ENCODE measurements at regions of chr1 and their contacts with region 1.

Region 1: GRCh38 chr1:175373786-175374623 is 181.4 kb upstream of the KIAA0040 start:
- DNase-seq: peak; percentile 77
- H3K4me3 ChIP-seq: peak overlapping the region in 1 of 2 experiments; percentile 29; a peak in 1 of 4 replicates
- H3K27ac ChIP-seq: no peak overlapping the region; a peak in 1 of 4 replicates
- H3K4me1 ChIP-seq: peaks cover 0 to 30% of the 10 kb centered on the region in 2 experiments; a peak in 2 of 4 replicates
- H3K27me3 ChIP-seq: no peaks in the 10 kb centered on the region
- CTCF ChIP-seq: peak; percentile 42
- EP300 ChIP-seq: no peak
- RAD21 ChIP-seq: peak; percentile 90

Region 2: DNA sequence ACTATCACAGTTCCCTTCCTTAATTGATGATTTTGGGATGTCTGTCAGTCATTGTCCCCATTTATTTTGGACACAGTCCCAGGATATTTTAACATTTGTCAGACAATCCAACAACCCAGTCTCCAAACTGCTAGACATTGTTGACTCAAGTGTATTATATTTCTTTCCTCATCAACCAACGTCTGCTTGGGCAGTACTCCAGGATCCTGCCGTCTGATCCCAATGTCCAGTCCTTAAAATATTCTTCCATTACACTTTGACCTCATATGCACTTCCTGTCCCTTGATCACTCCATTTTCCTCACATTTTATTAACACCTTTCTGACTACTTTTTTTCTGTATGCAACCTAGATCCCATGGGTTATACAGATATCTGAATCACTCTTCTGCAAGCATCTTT is 141.7 kb before region 1 on chr1:
- CTCF ChIA-PET with region 1: no interaction called
- POLR2A ChIA-PET with region 1: no interaction called
- DNase-seq: no peak
- H3K4me3 ChIP-seq: no peak overlapping the region
- H3K27ac ChIP-seq: no peak overlapping the region
- H3K4me1 ChIP-seq: no peaks in the 10 kb centered on the region
- H3K27me3 ChIP-seq: no peaks in the 10 kb centered on the region
- CTCF ChIP-seq: no peak
- EP300 ChIP-seq: no peak
- RAD21 ChIP-seq: no peak

Region 3: DNA sequence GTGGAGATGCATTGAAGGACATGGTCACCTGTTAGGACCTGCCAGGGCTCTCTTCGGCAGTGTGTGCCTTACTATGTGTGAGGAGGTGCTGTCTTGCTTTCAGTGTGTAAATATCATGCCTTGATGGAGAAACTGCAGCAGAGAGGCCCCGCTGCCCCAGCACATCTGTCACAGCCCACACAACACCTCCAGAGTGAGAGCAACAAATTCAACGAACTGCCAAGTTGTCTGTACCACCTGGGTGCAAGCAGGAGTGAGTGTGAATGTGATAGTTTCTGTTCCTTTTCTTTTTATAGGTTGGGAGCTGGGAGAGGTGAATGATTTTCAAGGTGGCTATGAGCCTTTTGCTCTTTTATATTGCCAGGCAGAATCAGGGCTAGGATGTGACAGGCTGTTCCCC is 66.8 kb before region 1 on chr1:
- CTCF ChIA-PET with region 1: no interaction called
- POLR2A ChIA-PET with region 1: no interaction called
- DNase-seq: no peak
- H3K4me3 ChIP-seq: no peak overlapping the region
- H3K27ac ChIP-seq: no peak overlapping the region
- H3K4me1 ChIP-seq: no peaks in the 10 kb centered on the region
- H3K27me3 ChIP-seq: no peaks in the 10 kb centered on the region
- CTCF ChIP-seq: no peak
- EP300 ChIP-seq: no peak
- RAD21 ChIP-seq: no peak

Region 4: DNA sequence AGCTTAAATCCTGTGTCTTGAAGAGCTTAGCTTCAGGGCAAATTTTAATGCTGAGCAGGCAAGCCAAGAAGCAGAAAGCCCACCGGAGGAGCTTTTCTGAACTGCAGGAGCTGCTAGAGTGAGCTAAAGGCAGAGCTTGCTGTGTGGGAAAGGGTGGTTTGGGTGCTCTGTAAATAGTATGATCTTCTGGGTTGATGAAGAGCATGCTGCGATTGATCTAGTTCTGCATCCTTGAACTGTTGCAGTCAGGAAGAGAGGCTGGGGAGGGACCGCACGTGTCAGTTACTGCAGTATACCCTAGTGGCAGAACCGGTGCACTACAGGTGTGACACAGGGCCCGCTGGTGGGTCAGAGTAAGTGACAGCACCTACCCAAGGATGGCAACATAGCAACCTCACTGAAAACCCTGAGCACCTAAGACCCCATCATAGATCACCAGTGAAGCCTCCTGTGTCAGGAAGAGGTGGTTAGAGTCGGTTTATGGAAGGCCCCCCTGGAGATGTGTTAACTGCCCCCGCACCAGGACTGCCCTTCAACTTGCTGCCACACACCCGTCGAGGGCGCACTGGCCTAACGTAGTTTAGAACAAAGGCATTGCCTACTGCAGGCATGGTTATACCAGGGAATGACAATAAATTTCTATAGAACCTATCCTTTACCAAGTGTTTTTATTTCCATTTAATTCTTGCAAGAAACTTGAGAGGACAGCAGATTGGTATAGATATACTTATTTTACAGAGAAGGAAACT is 35.4 kb before region 1 on chr1:
- CTCF ChIA-PET with region 1: interaction called, 11 read pairs
- POLR2A ChIA-PET with region 1: no interaction called
- DNase-seq: peak; percentile 41
- H3K4me3 ChIP-seq: no peak overlapping the region
- H3K27ac ChIP-seq: no peak overlapping the region
- H3K4me1 ChIP-seq: peaks cover 0 to 4% of the 10 kb centered on the region in 2 experiments; a peak in 2 of 4 replicates
- H3K27me3 ChIP-seq: no peaks in the 10 kb centered on the region
- CTCF ChIP-seq: no peak
- EP300 ChIP-seq: no peak
- RAD21 ChIP-seq: 0 out of 2 replicates have a peak, but pooled peaks have one; percentile 3

Region 5: GRCh38 chr1:175441791-175442190 is 67.8 kb after region 1 on chr1:
- CTCF ChIA-PET with region 1: interaction called, 10 read pairs
- POLR2A ChIA-PET with region 1: interaction called, 5 read pairs
- DNase-seq: no peak
- H3K4me3 ChIP-seq: no peak overlapping the region
- H3K27ac ChIP-seq: no peak overlapping the region
- H3K4me1 ChIP-seq: peaks cover 0 to 18% of the 10 kb centered on the region in 2 experiments; a peak in 2 of 4 replicates
- H3K27me3 ChIP-seq: no peaks in the 10 kb centered on the region
- CTCF ChIP-seq: no peak
- EP300 ChIP-seq: no peak
- RAD21 ChIP-seq: no peak

Region 6: DNA sequence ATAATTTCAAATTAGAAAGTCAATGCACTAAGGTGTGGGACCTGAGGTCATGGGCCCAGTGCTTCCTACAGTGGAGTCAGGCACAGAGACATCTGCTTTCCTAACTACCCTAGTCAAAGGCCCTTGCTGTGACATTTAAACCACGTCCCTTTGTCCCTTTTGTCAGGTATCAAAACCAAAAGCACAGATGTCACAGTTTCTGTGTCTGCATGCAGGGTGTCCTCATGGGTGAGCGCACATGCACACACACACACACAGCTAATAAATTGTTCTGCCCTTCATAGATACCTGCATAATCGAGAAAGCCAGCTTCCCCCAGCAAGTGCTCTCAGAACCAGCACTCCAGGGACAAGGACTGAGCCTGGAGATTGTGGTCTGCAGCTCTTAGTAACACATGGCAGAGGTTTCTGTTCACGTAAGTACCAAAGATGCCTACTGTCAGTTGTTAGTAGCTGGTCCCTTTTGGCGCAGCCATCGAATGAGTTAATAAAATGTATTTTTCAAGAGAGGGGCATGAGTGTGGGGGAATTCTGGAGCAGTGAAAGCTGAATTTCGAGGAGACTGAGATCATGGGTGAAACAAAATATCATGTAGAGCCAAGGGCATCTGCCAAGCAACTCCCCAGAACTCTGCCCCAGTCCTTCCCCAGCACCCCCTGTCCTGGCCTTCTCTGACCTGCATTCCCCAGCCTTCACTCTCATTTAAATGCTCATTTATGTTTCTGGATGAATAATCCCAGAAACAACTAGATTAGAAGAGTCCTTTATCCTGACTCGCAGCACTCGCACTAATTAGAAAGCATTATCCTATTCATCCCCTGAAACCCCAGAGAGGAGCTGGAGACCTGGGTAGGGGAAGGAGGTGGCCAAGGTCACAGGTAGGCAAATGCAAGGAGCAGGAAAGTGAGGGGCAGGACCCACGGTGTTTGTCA is 343.9 kb after region 1 on chr1:
- CTCF ChIA-PET with region 1: interaction called, 19 read pairs
- POLR2A ChIA-PET with region 1: no interaction called
- DNase-seq: no peak
- H3K4me3 ChIP-seq: no peak overlapping the region
- H3K27ac ChIP-seq: no peak overlapping the region
- H3K4me1 ChIP-seq: peaks cover 0 to 57% of the 10 kb centered on the region in 2 experiments; a peak in 2 of 4 replicates
- H3K27me3 ChIP-seq: no peaks in the 10 kb centered on the region
- CTCF ChIP-seq: no peak
- EP300 ChIP-seq: no peak
- RAD21 ChIP-seq: no peak

Region 7: DNA sequence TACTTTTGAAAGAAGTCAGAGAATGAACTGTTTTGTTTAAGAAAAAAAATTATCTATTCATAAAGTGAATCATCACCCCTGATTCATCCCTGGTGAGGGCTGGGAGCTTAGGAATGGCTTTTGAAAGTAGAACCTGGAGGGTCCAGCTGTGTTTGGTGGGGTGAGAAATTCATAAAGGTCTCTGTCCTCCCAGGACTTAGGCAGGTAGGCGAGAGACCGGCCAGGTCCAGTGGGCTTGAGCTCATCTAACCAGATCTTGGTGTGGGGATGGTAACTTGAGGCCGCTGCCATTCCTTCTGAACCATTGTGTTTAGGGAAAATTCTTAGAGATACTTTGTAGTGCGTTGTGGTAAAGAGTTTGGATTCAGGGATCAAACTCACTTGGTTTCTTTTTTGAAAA is 526.2 kb after region 1 on chr1:
- CTCF ChIA-PET with region 1: interaction called, 11 read pairs
- POLR2A ChIA-PET with region 1: no interaction called
- DNase-seq: no peak
- H3K4me3 ChIP-seq: no peak overlapping the region
- H3K27ac ChIP-seq: no peak overlapping the region
- H3K4me1 ChIP-seq: no peaks in the 10 kb centered on the region
- H3K27me3 ChIP-seq: no peaks in the 10 kb centered on the region
- CTCF ChIP-seq: no peak
- EP300 ChIP-seq: no peak
- RAD21 ChIP-seq: no peak

Region 8: DNA sequence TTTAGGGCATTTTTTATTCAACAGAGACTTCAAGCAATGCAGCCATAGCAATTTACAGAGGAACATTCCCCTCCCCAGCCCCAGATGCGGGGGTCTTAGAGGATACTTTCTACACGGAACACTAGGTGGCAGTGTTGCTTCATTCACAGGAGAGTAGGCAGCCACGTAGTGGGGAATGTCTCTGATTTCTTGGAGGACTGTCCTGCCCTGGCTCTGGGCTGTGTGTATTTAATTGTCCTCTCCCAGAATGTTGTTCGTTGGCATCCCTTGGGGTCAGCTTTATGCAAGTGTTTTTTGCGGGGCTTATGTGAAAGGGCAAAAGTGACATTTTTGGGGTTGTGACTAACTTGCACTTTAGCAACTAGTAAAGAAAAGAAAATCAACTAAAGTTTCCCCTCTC is 1185.9 kb after region 1 on chr1:
- CTCF ChIA-PET with region 1: interaction called, 14 read pairs
- POLR2A ChIA-PET with region 1: no interaction called
- DNase-seq: peak; percentile 77
- H3K4me3 ChIP-seq: no peak overlapping the region; a peak in 1 of 4 replicates
- H3K27ac ChIP-seq: no peak overlapping the region
- H3K4me1 ChIP-seq: no peaks in the 10 kb centered on the region
- H3K27me3 ChIP-seq: no peaks in the 10 kb centered on the region
- CTCF ChIP-seq: peak; percentile 80
- EP300 ChIP-seq: no peak
- RAD21 ChIP-seq: peak; percentile 98

Measured in SK-N-SH (cell line).